ENCODE measurements at regions of chr12 and their contacts with region 1.

Region 1: GRCh38 chr12:96132819-96133218 is 61.4 kb upstream of the ELK3 start:
- DNase-seq: peak; percentile 61
- H3K4me3 Mint-ChIP-seq: no peak overlapping the region
- H3K27ac Mint-ChIP-seq: no peak overlapping the region
- H3K4me1 Mint-ChIP-seq: peaks cover 17% of the 10 kb centered on the region
- H3K27me3 Mint-ChIP-seq: peaks cover 26% of the 10 kb centered on the region
- CTCF ChIP-seq: peak; percentile 45

Region 2: GRCh38 chr12:96061864-96062453 is 70.9 kb before region 1 on chr12:
- CTCF ChIA-PET with region 1: no interaction called
- intact Hi-C with region 1: loop called (anchors 1 kb)
- DNase-seq: peak; percentile 82
- H3K4me3 Mint-ChIP-seq: no peak overlapping the region
- H3K27ac Mint-ChIP-seq: no peak overlapping the region
- H3K4me1 Mint-ChIP-seq: no peaks in the 10 kb centered on the region
- H3K27me3 Mint-ChIP-seq: no peaks in the 10 kb centered on the region
- CTCF ChIP-seq: peak; percentile 72

Region 3: GRCh38 chr12:96194971-96195844 is 62.4 kb after region 1 on chr12:
- CTCF ChIA-PET with region 1: interaction called, 3 read pairs
- intact Hi-C with region 1: loop called (anchors 5 kb)
- DNase-seq: peak; percentile 46
- H3K4me3 Mint-ChIP-seq: peak overlapping the region; percentile 85
- H3K27ac Mint-ChIP-seq: peak overlapping the region; percentile 92
- H3K4me1 Mint-ChIP-seq: peaks cover 37% of the 10 kb centered on the region
- H3K27me3 Mint-ChIP-seq: no peaks in the 10 kb centered on the region
- CTCF ChIP-seq: no peak